Esophagus squamous epithelium (tissue), 5 donors: ENCODE measurements at regions of chr9 and their contacts with region 1.

Region 1: GRCh38 chr9:127734747-127735529 is at the start of gene TOR2A:
- DNase-seq: peak; percentile 69
- H3K4me3 ChIP-seq: peak within 1 kb of the TSS; percentile 56 to 81 (median 68)
- H3K27ac ChIP-seq: peak within 1 kb of the TSS; percentile 92 to 98 (median 93)
- H3K4me1 ChIP-seq: peaks cover 7 to 30% (median 12%) of the 10 kb centered on the region in 3 donors
- H3K27me3 ChIP-seq: no peaks in the 10 kb centered on the region
- CTCF ChIP-seq: peak; percentile 88 to 99 (median 98)
- POLR2A ChIP-seq: peak in 3 of 4 donors; percentile 30 to 94 (median 91)
- total RNA-seq, gene TOR2A: 10.7 to 12.5 (median 11.5) TPM

Region 2: DNA sequence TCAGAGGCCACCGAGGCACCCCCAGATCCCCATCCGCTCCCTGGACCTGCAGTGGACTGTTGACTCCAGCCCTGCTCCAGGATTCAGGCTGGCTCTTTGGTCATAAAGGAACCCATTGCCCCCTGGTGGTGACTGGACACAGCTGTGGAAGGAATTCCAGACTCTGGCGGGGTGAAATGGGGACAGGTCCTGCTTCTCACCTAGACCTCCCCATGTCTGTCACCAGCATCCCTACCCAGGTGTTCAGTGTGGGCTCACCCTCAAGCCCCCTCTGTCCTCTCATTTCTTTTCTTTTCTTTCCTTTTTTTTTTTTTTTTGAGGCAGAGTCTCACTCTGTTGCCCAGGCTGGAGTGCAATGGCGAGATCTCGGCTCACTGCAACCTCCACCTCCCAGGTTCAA is 148.4 kb before region 1 on chr9:
- intact Hi-C with region 1: loop called (anchors 5 kb)
- DNase-seq: no peak
- H3K4me3 ChIP-seq: no peak overlapping the region
- H3K27ac ChIP-seq: peak overlapping the region in 2 of 4 donors; percentile 98 to 99
- H3K4me1 ChIP-seq: peaks cover 9 to 62% (median 11%) of the 10 kb centered on the region in 3 donors
- H3K27me3 ChIP-seq: no peaks in the 10 kb centered on the region
- CTCF ChIP-seq: peak; percentile 73 to 94 (median 90)
- POLR2A ChIP-seq: no peak

Region 3: DNA sequence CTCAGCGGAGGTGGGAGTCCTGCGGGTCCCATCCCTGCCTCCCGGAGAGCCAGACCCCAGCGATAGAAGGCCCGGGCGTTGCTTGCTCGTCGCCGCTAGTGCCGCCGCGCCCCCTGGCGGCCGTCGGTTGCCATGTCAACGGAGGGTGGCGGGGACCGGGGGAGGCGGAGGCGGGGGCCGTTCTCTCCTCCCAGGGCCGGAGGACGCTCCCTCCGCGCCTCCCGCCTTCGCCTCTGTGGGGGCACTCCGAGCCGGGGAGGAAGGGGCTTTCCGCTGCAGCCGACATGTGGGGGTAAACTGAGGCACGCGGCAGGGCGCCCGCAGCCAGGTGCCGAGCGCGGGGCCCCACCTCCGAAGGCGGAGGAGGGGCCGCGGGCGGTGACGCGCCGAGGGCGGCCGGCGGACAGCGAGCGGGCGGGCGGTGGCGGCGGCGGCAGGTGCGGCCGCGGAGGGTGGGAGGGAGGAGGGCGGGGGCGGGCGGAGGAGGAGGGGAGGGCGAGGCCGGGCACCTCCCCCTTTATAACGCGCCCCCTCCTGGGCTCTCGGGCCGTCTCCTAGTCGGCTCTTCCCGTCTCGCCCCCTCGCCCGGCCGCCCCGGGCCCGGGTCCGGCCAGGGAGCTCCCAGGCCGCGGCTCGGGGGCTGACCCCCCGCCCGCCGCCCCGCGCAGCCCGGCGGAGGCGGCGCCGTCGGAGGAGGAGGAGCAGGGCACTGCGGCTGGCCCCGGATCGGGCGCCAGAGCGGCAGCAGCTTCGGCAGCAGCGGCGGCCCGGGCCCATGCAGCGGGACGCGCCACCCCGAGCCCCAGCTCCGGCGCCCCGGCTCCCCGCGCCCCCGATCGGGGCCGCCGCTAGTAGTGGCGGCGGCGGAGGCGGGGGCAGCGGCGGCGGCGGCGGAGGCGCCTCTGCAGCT is 50.3 kb after region 1 on chr9:
- intact Hi-C with region 1: loop called (anchors 5 kb)
- DNase-seq: peak; percentile 45
- H3K4me3 ChIP-seq: peak overlapping the region; percentile 73 to 87 (median 84)
- H3K27ac ChIP-seq: peak overlapping the region; percentile 92 to 100 (median 99)
- H3K4me1 ChIP-seq: peaks cover 0 to 73% (median 33%) of the 10 kb centered on the region in 3 donors
- H3K27me3 ChIP-seq: no peaks in the 10 kb centered on the region
- CTCF ChIP-seq: peak; percentile 92 to 99 (median 96)
- POLR2A ChIP-seq: no peak

Region 4: GRCh38 chr9:127838375-127839078 is 103.6 kb after region 1 on chr9:
- intact Hi-C with region 1: no loop called
- DNase-seq: peak; percentile 42
- H3K4me3 ChIP-seq: peak overlapping the region in 1 of 4 donors; percentile 41
- H3K27ac ChIP-seq: peak overlapping the region; percentile 70 to 96 (median 84)
- H3K4me1 ChIP-seq: peaks cover 28 to 80% (median 49%) of the 10 kb centered on the region in 3 donors
- H3K27me3 ChIP-seq: no peaks in the 10 kb centered on the region
- CTCF ChIP-seq: no peak
- POLR2A ChIP-seq: peak in 1 of 4 donors; percentile 34

Region 5: DNA sequence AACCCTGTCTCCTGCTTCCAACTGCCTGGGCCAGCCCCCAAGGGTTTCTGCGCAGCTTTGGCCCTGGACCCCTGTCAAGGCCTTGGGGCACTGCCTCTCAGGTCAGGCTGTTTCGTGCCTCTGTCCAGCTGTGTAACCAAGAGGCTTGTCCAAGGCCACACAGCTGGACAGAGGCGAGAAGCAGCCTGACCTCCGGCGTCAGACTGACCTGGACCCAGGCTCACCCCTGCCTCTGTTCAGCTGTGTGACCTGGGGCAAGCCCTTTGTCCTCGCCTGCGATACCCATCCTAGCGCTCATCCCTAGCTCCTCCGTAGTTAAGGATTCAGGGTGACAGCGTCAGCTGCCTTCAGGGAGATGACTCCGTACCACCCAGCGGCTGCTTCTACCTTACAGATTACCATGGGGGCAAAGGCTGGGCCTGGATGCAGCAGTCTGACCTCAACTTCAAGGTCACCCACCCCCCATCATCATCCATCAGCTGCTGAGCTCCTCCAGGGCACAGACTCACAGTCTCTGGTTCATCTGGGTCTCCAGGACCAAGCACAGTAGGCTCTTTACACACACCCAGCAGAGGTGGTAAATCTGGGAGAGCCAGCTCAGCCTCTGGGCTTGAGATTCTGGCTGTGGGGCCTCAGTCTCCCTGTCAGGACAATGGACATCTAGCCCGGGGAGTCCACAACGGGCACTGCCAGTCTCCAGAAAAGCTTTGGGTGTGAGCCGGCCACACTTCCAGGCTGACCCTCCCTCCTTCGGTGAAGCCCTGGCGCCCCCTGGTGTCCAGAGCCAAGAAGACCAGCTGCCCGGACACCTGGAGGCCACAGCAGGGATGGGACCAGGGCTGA is 134.6 kb after region 1 on chr9:
- intact Hi-C with region 1: loop called (anchors 10 kb)
- DNase-seq: no peak
- H3K4me3 ChIP-seq: no peak overlapping the region
- H3K27ac ChIP-seq: peak overlapping the region in 1 of 4 donors; percentile 36
- H3K4me1 ChIP-seq: peaks cover 6 to 34% (median 13%) of the 10 kb centered on the region in 3 donors
- H3K27me3 ChIP-seq: no peaks in the 10 kb centered on the region
- CTCF ChIP-seq: peak; percentile 54 to 94 (median 88)
- POLR2A ChIP-seq: no peak

Region 6: GRCh38 chr9:127921557-127922120 is 186.7 kb after region 1 on chr9:
- intact Hi-C with region 1: loop called (anchors 5 kb)
- DNase-seq: no peak
- H3K4me3 ChIP-seq: peak overlapping the region in 2 of 4 donors; percentile 25 to 51
- H3K27ac ChIP-seq: no peak overlapping the region
- H3K4me1 ChIP-seq: peaks cover 37 to 59% (median 38%) of the 10 kb centered on the region in 3 donors
- H3K27me3 ChIP-seq: peaks cover 0 to 26% (median 0%) of the 10 kb centered on the region in 4 donors
- CTCF ChIP-seq: peak; percentile 88 to 98 (median 96)
- POLR2A ChIP-seq: no peak